Sigmoid colon (tissue), 7 donors: ENCODE measurements at regions of chr1 and their contacts with region 1.

Region 1: DNA sequence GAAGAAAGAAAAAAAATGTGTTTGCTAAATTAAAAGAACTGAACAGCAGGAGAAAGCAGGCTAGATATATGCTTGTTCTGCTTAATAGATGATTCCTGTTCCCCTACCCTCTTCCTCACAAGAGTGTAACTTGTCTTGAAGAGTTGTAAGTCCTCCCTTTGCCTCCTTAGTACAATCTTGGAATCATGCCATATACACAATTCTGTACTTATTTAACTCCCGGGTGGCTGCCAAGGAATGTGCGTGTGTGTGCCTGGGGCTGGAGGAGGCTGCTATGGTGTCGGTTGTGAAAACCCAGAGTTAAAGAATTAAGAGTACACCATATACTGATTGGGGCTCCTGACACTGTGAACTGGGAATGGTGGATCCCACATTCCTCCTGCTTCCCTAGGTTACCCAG is 194.2 kb downstream of the SIPA1L2 start:
- DNase-seq: peak; percentile 76
- H3K4me3 ChIP-seq: no peak overlapping the region
- H3K27ac ChIP-seq: peak overlapping the region in 3 of 4 donors; percentile 1 to 63 (median 61)
- H3K4me1 ChIP-seq: peaks cover 0 to 32% (median 18%) of the 10 kb centered on the region in 4 donors
- H3K27me3 ChIP-seq: no peaks in the 10 kb centered on the region
- CTCF ChIP-seq: no peak
- EP300 ChIP-seq: no peak
- POLR2A ChIP-seq: no peak

Region 2: DNA sequence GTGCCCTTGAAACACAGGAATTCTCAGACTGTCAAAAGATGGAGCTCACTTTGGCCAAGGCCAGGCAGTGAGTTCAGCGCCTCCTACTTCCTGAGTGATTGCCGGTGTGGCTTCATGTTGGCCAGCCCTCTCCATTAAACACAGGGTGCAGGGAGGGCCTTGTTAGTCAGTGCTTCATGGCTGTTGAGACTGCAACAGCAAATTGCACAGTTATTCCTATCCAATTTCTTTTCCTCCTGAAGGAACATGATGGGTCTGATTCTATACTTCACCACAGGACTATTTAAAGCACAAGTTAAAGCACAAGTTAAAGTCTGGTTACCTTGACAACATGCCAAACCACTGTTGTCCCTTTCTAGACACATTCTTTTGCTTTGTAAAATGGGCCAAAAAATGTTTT is 37.6 kb after region 1 on chr1:
- intact Hi-C with region 1: loop called (anchors 5 kb)
- DNase-seq: no peak
- H3K4me3 ChIP-seq: no peak overlapping the region
- H3K27ac ChIP-seq: peak overlapping the region in 3 of 4 donors; percentile 7 to 39 (median 35)
- H3K4me1 ChIP-seq: peaks cover 0 to 21% (median 12%) of the 10 kb centered on the region in 4 donors
- H3K27me3 ChIP-seq: no peaks in the 10 kb centered on the region
- CTCF ChIP-seq: no peak
- EP300 ChIP-seq: no peak
- POLR2A ChIP-seq: no peak